B cell (primary cell): ENCODE measurements at regions of chr13 and their contacts with region 1.

Region 1: GRCh38 chr13:40933508-40934204 is 85.5 kb downstream of the ELF1 start:
- DNase-seq: peak; percentile 75
- ATAC-seq: peak; percentile 92
- H3K4me3 ChIP-seq: peak overlapping the region in 1 of 5 experiments; percentile 4
- H3K4me3 Mint-ChIP-seq: peak overlapping the region; percentile 48
- H3K27ac ChIP-seq: peak overlapping the region; percentile 43 to 79
- H3K27ac Mint-ChIP-seq: peak overlapping the region; percentile 74
- H3K4me1 ChIP-seq: peaks cover 22 to 23% of the 10 kb centered on the region in 2 donors
- H3K4me1 Mint-ChIP-seq: peaks cover 43% of the 10 kb centered on the region
- H3K27me3 ChIP-seq: no peaks in the 10 kb centered on the region
- H3K27me3 Mint-ChIP-seq: no peaks in the 10 kb centered on the region
- CTCF ChIP-seq: no peak

Region 2: GRCh38 chr13:39484506-39485313 is 1448.9 kb before region 1 on chr13:
- CTCF ChIA-PET with region 1: no interaction called
- POLR2A ChIA-PET with region 1: no interaction called
- intact Hi-C with region 1: no loop called
- DNase-seq: no peak
- ATAC-seq: no peak
- H3K4me3 ChIP-seq: no peak overlapping the region
- H3K4me3 Mint-ChIP-seq: no peak overlapping the region
- H3K27ac ChIP-seq: no peak overlapping the region
- H3K27ac Mint-ChIP-seq: no peak overlapping the region
- H3K4me1 ChIP-seq: no peaks in the 10 kb centered on the region
- H3K4me1 Mint-ChIP-seq: no peaks in the 10 kb centered on the region
- H3K27me3 ChIP-seq: no peaks in the 10 kb centered on the region
- H3K27me3 Mint-ChIP-seq: peaks cover 3% of the 10 kb centered on the region
- CTCF ChIP-seq: no peak

Region 3: DNA sequence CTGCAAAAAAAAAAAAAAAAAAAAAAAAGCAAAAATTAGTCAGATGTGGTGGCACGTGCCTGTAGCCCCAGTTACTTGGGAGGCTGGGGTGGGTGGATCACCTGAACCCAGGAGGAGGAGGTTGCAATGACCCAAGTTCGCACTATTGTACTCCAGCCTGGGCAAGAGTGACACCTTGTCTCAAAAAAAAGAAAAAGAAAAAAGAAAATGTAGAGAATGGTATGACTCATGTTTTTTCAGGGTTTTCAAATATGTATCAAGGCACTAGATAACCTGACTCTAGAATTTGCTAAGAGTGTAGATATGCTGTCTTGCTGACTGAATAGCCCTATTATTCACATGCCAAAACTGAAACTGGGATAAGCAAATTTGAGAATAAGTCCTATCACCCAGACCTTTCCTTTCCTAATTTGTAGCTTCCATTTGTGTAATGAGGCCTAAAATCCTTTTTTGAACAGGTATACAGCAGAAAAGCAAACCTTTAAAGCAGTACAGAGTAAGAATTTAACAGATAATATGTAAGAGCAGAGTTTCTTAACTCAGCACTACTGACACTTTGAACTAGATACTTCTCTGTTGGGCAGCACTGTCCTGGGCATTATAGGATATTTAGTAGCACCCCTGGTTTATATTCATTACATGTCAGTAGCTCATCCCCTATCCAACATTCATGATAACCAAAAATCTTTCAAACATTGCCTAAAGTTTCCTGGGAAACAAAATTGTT is 23.2 kb before region 1 on chr13:
- CTCF ChIA-PET with region 1: no interaction called
- POLR2A ChIA-PET with region 1: no interaction called
- intact Hi-C with region 1: no loop called
- DNase-seq: no peak
- ATAC-seq: no peak
- H3K4me3 ChIP-seq: no peak overlapping the region
- H3K4me3 Mint-ChIP-seq: no peak overlapping the region
- H3K27ac ChIP-seq: no peak overlapping the region
- H3K27ac Mint-ChIP-seq: no peak overlapping the region
- H3K4me1 ChIP-seq: no peaks in the 10 kb centered on the region
- H3K4me1 Mint-ChIP-seq: peaks cover 2% of the 10 kb centered on the region
- H3K27me3 ChIP-seq: no peaks in the 10 kb centered on the region
- H3K27me3 Mint-ChIP-seq: no peaks in the 10 kb centered on the region
- CTCF ChIP-seq: no peak

Region 4: GRCh38 chr13:40946485-40946884 is 12.8 kb after region 1 on chr13:
- CTCF ChIA-PET with region 1: interaction called, 5 read pairs
- POLR2A ChIA-PET with region 1: no interaction called
- intact Hi-C with region 1: loop called (anchors 2 kb)
- DNase-seq: no peak
- ATAC-seq: no peak
- H3K4me3 ChIP-seq: no peak overlapping the region
- H3K4me3 Mint-ChIP-seq: no peak overlapping the region
- H3K27ac ChIP-seq: peak overlapping the region in 1 of 2 donors; percentile 45
- H3K27ac Mint-ChIP-seq: peak overlapping the region; percentile 51
- H3K4me1 ChIP-seq: no peaks in the 10 kb centered on the region
- H3K4me1 Mint-ChIP-seq: peaks cover 6% of the 10 kb centered on the region
- H3K27me3 ChIP-seq: no peaks in the 10 kb centered on the region
- H3K27me3 Mint-ChIP-seq: no peaks in the 10 kb centered on the region
- CTCF ChIP-seq: no peak